ENCODE measurements at regions of chr13 and their contacts with region 1.

Region 1: GRCh38 chr13:76016799-76017400 is 380.8 kb downstream of the LMO7 start:
- DNase-seq: no peak
- ATAC-seq: no peak
- H3K4me3 ChIP-seq: no peak overlapping the region
- H3K27ac ChIP-seq: no peak overlapping the region
- H3K4me1 ChIP-seq: no peaks in the 10 kb centered on the region
- H3K27me3 ChIP-seq: no peaks in the 10 kb centered on the region
- CTCF ChIP-seq: peak; percentile 50

Region 2: GRCh38 chr13:75876360-75877050 is 140.4 kb before region 1 on chr13:
- CTCF ChIA-PET with region 1: no interaction called
- POLR2A ChIA-PET with region 1: no interaction called
- in situ Hi-C with region 1: no loop called
- intact Hi-C with region 1: loop called (anchors 2 kb)
- DNase-seq: peak; percentile 45
- ATAC-seq: peak; percentile 94
- H3K4me3 ChIP-seq: no peak overlapping the region
- H3K27ac ChIP-seq: no peak overlapping the region
- H3K4me1 ChIP-seq: peaks cover 5% of the 10 kb centered on the region; the same call in 1 of the 2 replicates
- H3K27me3 ChIP-seq: no peaks in the 10 kb centered on the region
- CTCF ChIP-seq: peak; percentile 84

Region 3: DNA sequence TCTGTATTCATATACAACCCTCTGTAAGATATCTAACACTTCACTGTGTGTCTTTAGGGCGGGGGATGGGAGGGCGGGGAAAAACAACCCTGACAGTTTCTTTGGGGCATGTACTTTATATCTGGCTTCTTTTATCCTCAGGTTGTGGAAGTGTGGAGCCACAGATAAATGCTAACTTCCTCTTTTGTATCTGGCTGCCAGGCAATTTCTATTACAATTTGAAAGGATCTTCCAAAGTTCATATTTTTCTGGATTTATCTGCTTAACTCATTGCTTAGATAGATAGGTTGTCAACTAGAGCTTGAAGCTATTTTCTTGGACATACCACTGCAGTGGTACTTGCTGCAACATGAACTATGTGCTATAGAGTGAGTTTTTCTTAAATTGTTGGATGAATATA is 12.2 kb after region 1 on chr13:
- CTCF ChIA-PET with region 1: no interaction called
- POLR2A ChIA-PET with region 1: no interaction called
- in situ Hi-C with region 1: no loop called
- intact Hi-C with region 1: no loop called
- DNase-seq: no peak
- ATAC-seq: no peak
- H3K4me3 ChIP-seq: no peak overlapping the region
- H3K27ac ChIP-seq: no peak overlapping the region
- H3K4me1 ChIP-seq: no peaks in the 10 kb centered on the region
- H3K27me3 ChIP-seq: no peaks in the 10 kb centered on the region
- CTCF ChIP-seq: no peak

Region 4: DNA sequence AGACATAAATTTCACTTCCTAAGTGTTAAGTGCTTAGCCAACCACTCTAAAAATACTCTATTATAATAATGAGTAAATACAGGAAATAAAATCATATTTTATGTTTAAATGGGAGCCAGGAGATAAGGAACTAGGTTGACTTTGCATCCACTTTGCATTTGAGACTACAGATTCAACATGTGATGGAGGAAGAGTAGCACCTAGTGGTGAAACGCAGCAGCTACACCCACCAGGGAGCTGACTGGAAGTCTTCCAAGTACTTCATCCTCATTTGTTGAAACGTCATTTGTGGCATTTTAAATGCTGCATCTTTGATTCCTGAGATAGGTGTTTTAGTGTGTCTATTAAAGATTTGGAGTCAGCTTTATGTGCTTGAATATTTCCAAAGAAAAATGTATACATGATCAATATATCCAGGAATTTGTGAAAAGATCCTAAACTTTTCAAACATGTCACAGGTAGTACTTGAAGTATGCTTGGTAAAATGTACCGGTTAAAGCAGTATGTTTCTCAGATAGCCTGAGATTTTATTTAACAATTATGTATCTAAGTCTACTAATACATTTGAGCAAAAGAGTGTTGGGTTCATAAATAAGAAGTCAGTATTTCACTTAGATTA is 886.8 kb after region 1 on chr13:
- CTCF ChIA-PET with region 1: no interaction called
- POLR2A ChIA-PET with region 1: no interaction called
- in situ Hi-C with region 1: no loop called
- intact Hi-C with region 1: loop called (anchors 10 kb)
- DNase-seq: peak; percentile 67
- ATAC-seq: no peak
- H3K4me3 ChIP-seq: no peak overlapping the region
- H3K27ac ChIP-seq: no peak overlapping the region
- H3K4me1 ChIP-seq: no peaks in the 10 kb centered on the region
- H3K27me3 ChIP-seq: no peaks in the 10 kb centered on the region
- CTCF ChIP-seq: peak; percentile 87

Measured in Panc1 (cell line).